ENCODE measurements at regions of chr9 and their contacts with region 1.

Region 1: GRCh38 chr9:37430841-37431597 is 8.5 kb downstream of the GRHPR start:
- DNase-seq: peak; percentile 21 to 88 (median 84)
- H3K4me3 ChIP-seq: no peak overlapping the region
- H3K27ac ChIP-seq: peak overlapping the region; percentile 68 to 99 (median 95)
- H3K27me3 ChIP-seq: no peaks in the 10 kb centered on the region
- CTCF ChIP-seq: peak in 55 of 56 donors; percentile 14 to 75 (median 56)

Region 2: DNA sequence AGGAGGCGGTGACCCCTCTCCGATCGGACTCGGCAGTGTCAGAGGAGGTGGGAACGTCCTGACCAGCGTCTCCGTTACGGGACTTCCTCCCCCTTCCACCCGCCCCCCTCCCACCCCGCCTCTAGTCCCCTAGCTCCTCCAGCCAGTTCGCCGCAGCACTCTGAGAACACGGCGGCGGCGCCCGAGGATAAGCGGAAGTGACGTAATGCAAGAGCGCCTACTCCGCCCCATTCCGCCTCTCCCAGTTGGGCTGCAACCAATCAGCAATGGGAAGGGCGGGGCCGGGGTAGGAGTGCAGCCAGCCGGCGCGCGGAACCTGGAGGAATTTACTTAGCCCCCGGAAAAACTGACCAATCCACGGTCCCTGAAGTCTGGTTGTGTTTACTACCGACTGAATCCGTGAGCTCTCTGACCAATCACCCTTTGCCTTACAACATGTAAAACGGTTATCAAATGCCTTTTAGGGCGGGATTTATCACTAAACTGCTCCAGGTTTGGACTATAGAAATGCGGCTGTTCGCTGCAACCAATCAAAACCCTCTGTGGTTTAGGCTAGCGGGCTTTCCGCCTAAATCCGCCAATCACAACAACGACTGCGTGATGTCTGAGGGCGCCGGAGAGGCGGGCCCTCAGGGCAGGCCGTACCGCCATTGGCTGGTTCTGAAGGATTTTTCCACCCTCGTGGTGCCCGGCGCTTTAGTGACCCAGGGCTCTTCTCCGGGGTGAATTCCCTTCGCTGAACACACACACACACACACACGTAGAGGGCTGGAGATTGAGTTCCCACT is 34.4 kb after region 1 on chr9 and contains the start of gene ZBTB5:
- intact Hi-C with region 1: loop called (anchors 2 to 5 kb)
- DNase-seq: peak; percentile 99 to 100 (median 99)
- H3K4me3 ChIP-seq: peak within 1 kb of the TSS; percentile 68 to 100 (median 95)
- H3K27ac ChIP-seq: peak within 1 kb of the TSS; percentile 55 to 99 (median 93)
- H3K27me3 ChIP-seq: no peaks in the 10 kb centered on the region
- CTCF ChIP-seq: peak in 12 of 56 donors; percentile 1 to 27 (median 13)
- total RNA-seq, gene ZBTB5: 6.8 to 16.0 (median 10.0) TPM